ENCODE measurements at regions of chr6 and their contacts with region 1.

Region 1: DNA sequence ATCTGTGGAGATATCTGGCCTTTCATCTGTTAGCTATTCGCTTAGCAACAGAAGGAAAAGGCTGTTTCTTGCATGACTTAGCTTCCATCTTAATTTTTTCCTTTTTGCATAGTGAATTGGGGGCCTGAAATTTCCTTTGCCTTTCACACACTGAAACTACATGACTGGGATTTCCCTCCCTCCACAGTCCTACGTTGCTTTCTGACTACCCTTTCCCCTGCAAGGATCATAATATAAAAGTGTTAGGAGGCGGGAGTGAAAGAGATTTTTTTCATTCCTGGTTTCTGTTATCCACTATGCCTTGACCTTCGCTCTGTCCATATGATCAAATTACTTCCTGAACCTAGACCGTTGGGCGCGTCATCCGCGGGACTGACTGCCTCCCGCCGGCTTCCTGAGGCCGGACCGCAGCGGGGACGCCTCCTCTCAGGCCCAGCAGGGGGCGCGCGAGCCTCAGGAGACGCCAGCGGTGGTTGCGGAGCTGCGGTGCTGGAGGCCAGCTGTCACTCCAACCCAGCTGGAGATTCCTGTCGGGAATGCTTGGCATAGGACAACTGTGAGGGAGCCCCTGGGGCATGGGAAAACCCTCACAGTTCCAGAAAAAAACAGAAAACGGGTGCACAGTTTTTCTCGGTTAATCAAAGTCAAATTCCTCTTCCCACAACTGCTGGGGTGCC is 55.6 kb downstream of the MEP1A start:
- DNase-seq: peak; percentile 84 to 93
- ATAC-seq: peak; percentile 99

Region 2: GRCh38 chr6:47047479-47048407 is 198.9 kb after region 1 on chr6:
- intact Hi-C with region 1: loop called in 1 of 2 experiments (anchors 5 kb)
- DNase-seq: peak; percentile 26 to 29
- ATAC-seq: peak; percentile 83

Region 3: GRCh38 chr6:47252633-47253032 is 403.8 kb after region 1 on chr6:
- intact Hi-C with region 1: no loop called
- DNase-seq: no peak
- ATAC-seq: no peak

Measured in left colon (tissue), 2 donors.